ENCODE measurements at regions of chr6 and their contacts with region 1.

Region 1: DNA sequence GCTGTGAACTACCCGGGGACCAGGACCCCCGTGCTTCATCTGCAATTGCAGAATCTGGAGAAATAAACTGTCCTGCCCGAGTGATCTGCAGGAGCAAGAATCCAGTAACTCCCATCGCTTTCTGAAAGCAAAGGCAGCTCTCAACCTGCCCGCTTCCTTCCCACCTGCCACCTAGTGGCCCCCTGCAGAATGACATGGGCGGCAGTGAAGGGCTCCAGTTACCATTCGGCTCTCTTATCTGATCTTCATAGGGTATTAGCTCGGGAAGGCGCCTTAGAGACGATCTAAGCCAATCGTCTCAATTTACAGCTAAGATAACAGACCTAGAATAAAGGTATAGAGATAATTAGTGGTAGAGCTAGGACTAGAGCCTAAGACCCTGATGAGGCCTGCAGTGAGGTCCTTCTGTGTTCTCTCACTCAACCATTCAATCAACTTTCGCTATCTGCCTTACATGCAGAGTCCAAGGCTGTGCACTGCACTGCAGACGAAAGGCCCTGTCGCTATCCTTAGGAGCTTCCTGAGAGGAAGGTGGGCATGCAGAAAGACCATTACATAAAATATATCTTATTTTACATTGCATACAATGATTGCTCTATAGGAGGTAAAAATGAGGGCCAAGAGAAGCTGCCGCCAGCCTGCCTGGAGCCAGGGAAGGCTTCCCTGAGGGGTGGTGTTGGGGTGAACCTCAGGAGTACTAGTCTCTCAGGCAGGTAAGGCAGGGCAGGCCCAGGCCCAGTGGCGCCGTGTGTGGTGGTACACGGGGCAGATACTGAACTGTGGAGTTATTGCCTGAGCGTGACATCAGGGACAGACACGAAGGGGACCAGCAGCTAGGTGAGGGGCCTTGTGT is 7.1 kb upstream of the PSMG4 start:
- DNase-seq: peak; percentile 91
- ATAC-seq: peak; percentile 92
- H3K4me3 Mint-ChIP-seq: no peak overlapping the region
- H3K27ac Mint-ChIP-seq: no peak overlapping the region
- H3K4me1 Mint-ChIP-seq: peaks cover 37% of the 10 kb centered on the region
- H3K27me3 Mint-ChIP-seq: peaks cover 17% of the 10 kb centered on the region
- CTCF ChIP-seq: peak; percentile 98

Region 2: GRCh38 chr6:3125815-3126214 is 125.9 kb before region 1 on chr6:
- CTCF ChIA-PET with region 1: interaction called, 24 read pairs
- POLR2A ChIA-PET with region 1: no interaction called
- DNase-seq: no peak
- ATAC-seq: peak; percentile 24; the same call in 1 of the 2 replicates
- H3K4me3 Mint-ChIP-seq: no peak overlapping the region
- H3K27ac Mint-ChIP-seq: peak overlapping the region; percentile 41
- H3K4me1 Mint-ChIP-seq: peaks cover 8% of the 10 kb centered on the region; the same call in 1 of the 2 replicates
- H3K27me3 Mint-ChIP-seq: no peaks in the 10 kb centered on the region
- CTCF ChIP-seq: no peak

Region 3: DNA sequence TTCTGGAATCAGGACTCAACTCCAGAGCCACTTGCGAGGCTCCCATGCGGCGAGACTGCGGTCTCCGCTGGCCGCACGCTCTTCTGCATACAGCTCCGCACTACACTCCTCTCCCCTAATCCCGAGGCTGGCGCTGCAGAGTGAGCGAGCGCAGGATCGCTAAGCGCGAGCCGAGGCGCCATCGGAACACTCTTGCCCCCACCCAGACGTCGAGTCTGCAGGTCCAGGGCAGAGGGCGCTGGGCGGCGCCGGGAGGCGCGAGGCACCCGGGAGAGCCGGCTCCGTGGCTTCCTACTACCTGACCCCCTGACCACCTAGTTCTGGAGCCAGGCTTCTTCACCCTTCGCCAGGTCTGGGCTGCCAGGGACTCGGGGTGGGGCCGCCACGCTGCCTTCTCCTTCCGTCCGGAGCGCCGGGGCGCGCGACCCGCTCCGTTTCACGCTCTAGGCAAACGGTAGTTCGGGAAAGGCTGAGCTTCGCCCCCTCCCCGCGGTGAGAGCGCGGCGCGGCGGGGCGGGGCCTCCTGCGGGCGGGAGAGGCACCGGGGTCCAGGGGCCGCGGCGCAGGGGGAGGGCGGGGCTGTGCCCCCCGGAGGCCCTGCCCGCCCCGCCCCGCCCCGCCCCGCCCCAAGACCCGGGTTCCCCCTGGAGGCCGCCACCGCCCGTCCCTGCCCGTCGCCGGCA is 89.0 kb before region 1 on chr6:
- CTCF ChIA-PET with region 1: interaction called, 30 read pairs
- POLR2A ChIA-PET with region 1: interaction called, 4 read pairs
- DNase-seq: peak; percentile 76
- ATAC-seq: peak; percentile 28
- H3K4me3 Mint-ChIP-seq: peak overlapping the region; percentile 84
- H3K27ac Mint-ChIP-seq: peak overlapping the region; percentile 94
- H3K4me1 Mint-ChIP-seq: peaks cover 44% of the 10 kb centered on the region
- H3K27me3 Mint-ChIP-seq: no peaks in the 10 kb centered on the region
- CTCF ChIP-seq: no peak

Region 4: DNA sequence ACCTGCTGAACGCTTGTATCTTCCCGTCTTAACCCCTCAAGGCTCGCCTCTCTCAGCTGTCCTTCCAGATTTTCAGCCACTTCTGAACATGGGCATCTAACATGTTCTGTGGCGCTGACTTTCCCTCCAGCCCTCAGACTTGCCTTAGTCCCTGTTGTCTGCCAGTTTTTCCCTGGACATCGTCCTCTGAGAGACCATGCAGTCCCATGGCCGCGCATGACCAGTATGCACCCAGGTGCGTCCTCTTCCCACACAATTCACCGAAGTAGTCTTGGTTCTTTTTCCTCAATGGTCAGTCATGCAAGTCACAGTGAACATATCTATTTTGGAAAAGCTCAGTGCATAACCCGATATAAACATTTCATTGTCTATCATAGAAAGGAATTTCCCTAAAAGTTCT is 33.4 kb before region 1 on chr6:
- CTCF ChIA-PET with region 1: no interaction called
- POLR2A ChIA-PET with region 1: no interaction called
- DNase-seq: no peak
- ATAC-seq: no peak
- H3K4me3 Mint-ChIP-seq: no peak overlapping the region
- H3K27ac Mint-ChIP-seq: no peak overlapping the region
- H3K4me1 Mint-ChIP-seq: peaks cover 14% of the 10 kb centered on the region
- H3K27me3 Mint-ChIP-seq: peaks cover 6% of the 10 kb centered on the region; the same call in 1 of the 2 replicates
- CTCF ChIP-seq: no peak

Region 5: DNA sequence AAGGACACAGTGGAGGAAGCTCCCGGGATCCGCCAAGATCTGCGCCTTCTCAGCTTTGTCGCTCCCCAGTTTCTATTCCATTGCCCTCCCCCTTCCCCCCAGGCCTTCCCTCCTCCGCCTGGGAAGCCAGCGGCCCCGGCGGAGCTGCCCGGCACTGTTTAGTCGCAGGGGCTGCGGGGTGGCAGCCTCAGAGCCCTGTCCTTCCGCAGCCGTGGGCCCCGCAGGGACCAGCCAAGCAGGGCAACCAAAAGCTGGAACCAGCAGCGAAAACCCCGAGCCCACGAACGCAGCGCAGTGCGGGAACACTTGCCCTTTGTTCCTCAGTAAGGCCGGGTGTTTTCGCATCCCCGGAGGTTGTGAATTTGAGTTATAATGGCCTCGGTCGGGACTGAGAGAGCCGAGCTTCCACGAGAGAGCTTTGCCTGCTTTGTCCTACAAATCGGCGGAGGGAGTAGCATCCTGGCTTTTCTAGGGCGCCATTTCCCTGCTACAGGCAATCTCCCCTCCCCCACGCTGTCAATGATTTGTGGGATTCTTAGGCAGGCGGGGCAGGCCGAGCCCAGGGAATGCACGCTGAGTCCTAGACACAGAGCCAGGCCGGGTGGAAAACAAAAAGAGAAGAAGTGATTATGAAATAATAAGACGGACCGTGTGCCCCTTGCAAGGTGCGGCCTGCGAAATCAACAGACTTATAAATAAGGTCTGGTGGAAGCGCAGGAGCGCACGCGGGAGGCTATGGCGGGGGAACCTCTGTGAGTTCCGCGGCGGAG is 20.3 kb before region 1 on chr6:
- CTCF ChIA-PET with region 1: interaction called, 66 read pairs
- POLR2A ChIA-PET with region 1: no interaction called
- DNase-seq: peak; percentile 70
- ATAC-seq: peak; percentile 10
- H3K4me3 Mint-ChIP-seq: peak overlapping the region; percentile 89
- H3K27ac Mint-ChIP-seq: peak overlapping the region; percentile 46
- H3K4me1 Mint-ChIP-seq: peaks cover 51% of the 10 kb centered on the region
- H3K27me3 Mint-ChIP-seq: peaks cover 23% of the 10 kb centered on the region
- CTCF ChIP-seq: no peak

Region 6: DNA sequence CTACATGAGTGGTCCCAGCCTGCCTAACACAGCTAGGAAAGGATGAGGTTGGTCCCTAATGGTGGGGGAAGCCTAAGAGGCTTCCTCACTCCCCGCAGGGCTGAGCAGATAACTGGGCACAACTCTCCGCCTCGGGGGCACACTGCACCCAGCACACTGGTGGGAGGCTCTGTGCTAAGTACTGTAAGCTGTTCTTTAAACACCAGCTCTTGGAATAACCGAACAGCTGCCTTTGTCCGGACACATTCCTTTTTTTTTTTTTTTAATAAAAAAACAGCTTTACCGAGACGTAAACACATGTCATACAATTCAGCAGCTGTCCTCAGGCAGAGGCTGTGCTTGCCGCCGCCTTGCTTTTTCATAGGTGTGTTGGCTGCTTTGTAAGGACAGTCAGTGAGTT is 14.0 kb after region 1 on chr6:
- CTCF ChIA-PET with region 1: interaction called, 22 read pairs
- POLR2A ChIA-PET with region 1: no interaction called
- DNase-seq: no peak
- ATAC-seq: no peak; the same call in 1 of the 2 replicates
- H3K4me3 Mint-ChIP-seq: no peak overlapping the region
- H3K27ac Mint-ChIP-seq: no peak overlapping the region; the same call in 1 of the 2 replicates
- H3K4me1 Mint-ChIP-seq: peaks cover 21% of the 10 kb centered on the region
- H3K27me3 Mint-ChIP-seq: no peaks in the 10 kb centered on the region
- CTCF ChIP-seq: no peak

Region 7: DNA sequence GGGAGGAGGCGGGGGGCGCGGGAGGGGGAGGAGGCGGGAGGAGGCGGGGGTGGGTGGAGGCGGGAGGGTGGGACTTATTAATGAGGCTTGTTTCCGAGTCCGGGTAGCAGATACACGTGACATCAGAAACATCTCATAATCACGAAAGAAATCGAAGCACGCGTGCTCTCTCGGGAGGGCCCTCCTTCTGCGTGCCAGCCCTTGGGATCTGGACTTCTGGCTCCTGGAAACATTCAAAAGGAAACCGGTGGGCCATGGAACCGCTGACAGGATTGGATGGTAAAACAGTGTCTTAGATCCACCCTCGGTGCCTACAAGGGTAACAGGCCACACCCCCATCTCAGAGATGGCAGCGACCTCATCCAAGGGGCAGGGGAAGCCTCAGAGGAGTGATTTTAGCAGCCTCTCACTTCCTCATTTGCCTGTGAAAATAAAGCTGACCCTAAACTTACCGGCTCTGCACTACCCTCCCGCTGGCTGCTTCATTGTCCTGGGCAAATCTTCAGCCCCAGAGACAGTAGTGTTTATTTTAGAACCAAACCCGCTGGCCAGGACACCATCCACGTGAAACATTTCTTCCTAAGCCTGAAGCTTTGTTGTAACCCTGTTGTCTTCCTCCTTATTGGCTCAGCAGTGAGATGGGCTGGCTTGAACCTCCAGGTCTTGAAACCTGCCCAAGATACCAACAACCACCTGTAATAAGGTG is 104.5 kb after region 1 on chr6:
- CTCF ChIA-PET with region 1: no interaction called
- POLR2A ChIA-PET with region 1: no interaction called
- DNase-seq: peak; percentile 70
- ATAC-seq: peak; percentile 93
- H3K4me3 Mint-ChIP-seq: peak overlapping the region; percentile 52
- H3K27ac Mint-ChIP-seq: peak overlapping the region; percentile 97
- H3K4me1 Mint-ChIP-seq: peaks cover 84% of the 10 kb centered on the region
- H3K27me3 Mint-ChIP-seq: no peaks in the 10 kb centered on the region
- CTCF ChIP-seq: no peak

Region 8: DNA sequence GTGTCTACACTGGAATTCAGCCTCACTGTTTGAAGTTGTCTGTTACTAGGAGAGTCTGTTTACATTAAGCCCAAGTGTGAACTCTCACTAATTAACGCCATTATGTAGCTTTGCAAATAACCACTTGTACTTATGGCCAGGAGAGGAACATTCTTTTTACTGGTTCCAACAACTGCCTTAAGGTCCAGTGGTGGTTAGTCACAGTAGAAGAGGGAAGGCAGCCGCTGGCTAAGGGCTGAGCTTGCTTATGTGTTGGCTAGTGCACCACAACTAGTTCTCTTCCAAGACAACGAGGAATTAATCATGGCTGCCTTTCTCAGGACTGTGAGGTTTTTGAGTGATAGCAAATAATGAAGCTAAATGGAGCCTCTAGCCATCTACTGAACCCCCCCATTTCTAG is 220.0 kb after region 1 on chr6:
- CTCF ChIA-PET with region 1: no interaction called
- POLR2A ChIA-PET with region 1: no interaction called
- DNase-seq: no peak
- ATAC-seq: no peak
- H3K4me3 Mint-ChIP-seq: no peak overlapping the region
- H3K27ac Mint-ChIP-seq: no peak overlapping the region
- H3K4me1 Mint-ChIP-seq: peaks cover 21% of the 10 kb centered on the region
- H3K27me3 Mint-ChIP-seq: peaks cover 12% of the 10 kb centered on the region
- CTCF ChIP-seq: no peak

Measured in WTC11 (cell line).